ENCODE measurements at regions of chr15 and their contacts with region 1.

Region 1: GRCh38 chr15:68618394-68618793 is 39.6 kb downstream of the CORO2B start:
- DNase-seq: peak; percentile 43
- H3K4me3 ChIP-seq: no peak overlapping the region
- H3K27ac ChIP-seq: no peak overlapping the region
- H3K4me1 ChIP-seq: peaks cover 24% of the 10 kb centered on the region
- H3K27me3 ChIP-seq: peaks cover 0 to under 1% of the 10 kb centered on the region in 2 experiments
- CTCF ChIP-seq: no peak
- POLR2A ChIP-seq: no peak

Region 2: DNA sequence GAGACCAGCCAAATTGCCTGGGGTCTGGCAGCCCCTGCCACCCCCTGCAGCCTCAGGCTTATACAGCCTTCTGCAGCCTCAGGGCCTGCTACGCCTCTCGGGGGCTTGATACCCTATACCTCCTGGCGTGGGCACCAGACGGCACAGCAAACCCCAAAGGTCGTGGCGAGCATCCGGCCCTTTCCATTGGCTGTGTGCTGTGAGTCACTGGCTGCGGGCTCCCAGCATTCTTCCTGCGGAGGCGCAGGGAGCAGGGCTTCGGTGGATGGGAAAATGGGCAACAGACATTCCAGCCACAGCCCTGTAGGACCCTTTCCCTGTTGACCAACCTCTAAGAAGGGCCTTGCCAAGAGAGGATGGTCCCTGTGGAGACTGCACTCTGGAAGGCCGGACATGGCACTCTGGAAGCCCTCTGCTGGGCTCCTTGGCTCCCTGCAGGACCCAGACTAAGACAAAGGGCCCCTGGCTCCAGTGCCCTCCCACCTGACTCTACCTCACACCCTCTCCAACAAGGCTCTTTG is 246.0 kb before region 1 on chr15:
- CTCF ChIA-PET with region 1: no interaction called
- POLR2A ChIA-PET with region 1: no interaction called
- dilution Hi-C with region 1: no loop called
- intact Hi-C with region 1: no loop called
- DNase-seq: peak; percentile 53
- H3K4me3 ChIP-seq: no peak overlapping the region
- H3K27ac ChIP-seq: no peak overlapping the region
- H3K4me1 ChIP-seq: peaks cover 15% of the 10 kb centered on the region
- H3K27me3 ChIP-seq: no peaks in the 10 kb centered on the region
- CTCF ChIP-seq: peak; percentile 41 to 78
- POLR2A ChIP-seq: no peak

Region 3: DNA sequence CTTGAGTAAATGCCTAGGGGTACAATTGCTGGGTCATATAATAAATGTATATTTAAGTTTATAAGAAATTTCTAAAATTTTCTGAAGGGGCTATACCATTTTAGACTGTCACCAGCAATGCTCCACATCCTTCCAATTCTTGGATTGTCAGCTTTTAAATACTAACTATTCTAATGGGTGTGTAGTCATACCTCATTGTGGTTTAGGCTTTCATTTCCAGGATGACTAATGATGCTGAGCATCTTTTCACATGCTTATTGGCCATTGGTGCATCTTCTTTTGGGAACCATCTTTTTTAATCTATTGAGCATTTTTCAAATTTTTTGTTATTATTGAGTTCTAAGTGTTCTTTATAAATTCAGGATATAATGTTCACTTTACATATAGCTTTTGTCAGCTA is 92.1 kb before region 1 on chr15:
- CTCF ChIA-PET with region 1: no interaction called
- POLR2A ChIA-PET with region 1: no interaction called
- dilution Hi-C with region 1: no loop called
- intact Hi-C with region 1: no loop called
- DNase-seq: no peak
- H3K4me3 ChIP-seq: no peak overlapping the region
- H3K27ac ChIP-seq: no peak overlapping the region
- H3K4me1 ChIP-seq: peaks cover 7% of the 10 kb centered on the region
- H3K27me3 ChIP-seq: peaks cover 4 to 8% of the 10 kb centered on the region in 2 experiments
- CTCF ChIP-seq: no peak
- POLR2A ChIP-seq: no peak

Region 4: DNA sequence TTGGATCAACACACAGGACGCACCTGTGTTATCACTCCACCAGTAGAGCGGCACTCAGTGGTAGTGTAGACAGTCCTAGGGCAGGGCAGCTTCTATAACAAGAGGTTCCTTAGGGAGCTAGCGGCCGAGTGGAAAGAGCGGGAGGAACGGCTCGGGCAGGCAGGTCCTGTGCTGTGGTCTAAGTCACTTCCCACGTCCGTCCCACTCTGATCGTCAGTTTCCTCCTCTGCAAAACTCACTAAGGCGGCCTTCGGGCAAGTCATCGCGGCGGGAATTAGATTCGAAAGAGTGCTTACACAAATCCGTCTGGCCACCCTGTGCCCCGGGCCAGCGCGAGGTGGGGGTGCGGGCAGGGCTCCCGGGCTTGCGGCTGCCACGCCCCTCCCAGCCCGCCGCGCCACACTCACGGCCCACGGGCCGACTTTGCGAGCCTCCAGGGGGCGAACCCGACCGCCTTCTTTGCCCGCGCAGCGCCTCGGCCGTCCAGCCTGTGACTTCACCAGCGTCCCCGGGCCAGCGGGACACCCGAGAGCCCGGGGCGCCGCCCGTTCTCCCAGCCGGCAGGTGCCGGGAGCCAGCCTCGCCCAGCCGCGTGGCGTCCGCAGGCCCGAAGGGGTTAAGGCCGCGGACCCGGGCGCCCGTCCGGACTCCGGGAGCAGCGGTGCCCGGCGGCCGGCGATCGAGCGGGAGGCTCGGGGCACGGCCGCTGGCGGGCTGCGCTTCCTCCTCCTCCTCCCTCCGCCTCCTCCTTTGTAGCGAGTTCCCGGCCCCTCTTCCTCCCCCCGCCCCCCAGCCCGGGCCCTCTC is 40.0 kb before region 1 on chr15:
- CTCF ChIA-PET with region 1: interaction called, 3 read pairs
- POLR2A ChIA-PET with region 1: no interaction called
- dilution Hi-C with region 1: no loop called
- intact Hi-C with region 1: loop called (anchors 2 kb)
- DNase-seq: peak; percentile 66
- H3K4me3 ChIP-seq: peak overlapping the region; percentile 30 to 44 (median 35)
- H3K27ac ChIP-seq: no peak overlapping the region
- H3K4me1 ChIP-seq: peaks cover 9% of the 10 kb centered on the region
- H3K27me3 ChIP-seq: peaks cover 19 to 28% of the 10 kb centered on the region in 2 experiments
- CTCF ChIP-seq: peak; percentile 25 to 67
- POLR2A ChIP-seq: no peak

Region 5: GRCh38 chr15:68795298-68795848 is 177.0 kb after region 1 on chr15:
- CTCF ChIA-PET with region 1: no interaction called
- POLR2A ChIA-PET with region 1: no interaction called
- dilution Hi-C with region 1: no loop called
- intact Hi-C with region 1: no loop called
- DNase-seq: peak; percentile 93
- H3K4me3 ChIP-seq: no peak overlapping the region
- H3K27ac ChIP-seq: peak overlapping the region; percentile 58
- H3K4me1 ChIP-seq: peaks cover 27% of the 10 kb centered on the region
- H3K27me3 ChIP-seq: no peaks in the 10 kb centered on the region
- CTCF ChIP-seq: no peak
- POLR2A ChIP-seq: no peak

Region 6: DNA sequence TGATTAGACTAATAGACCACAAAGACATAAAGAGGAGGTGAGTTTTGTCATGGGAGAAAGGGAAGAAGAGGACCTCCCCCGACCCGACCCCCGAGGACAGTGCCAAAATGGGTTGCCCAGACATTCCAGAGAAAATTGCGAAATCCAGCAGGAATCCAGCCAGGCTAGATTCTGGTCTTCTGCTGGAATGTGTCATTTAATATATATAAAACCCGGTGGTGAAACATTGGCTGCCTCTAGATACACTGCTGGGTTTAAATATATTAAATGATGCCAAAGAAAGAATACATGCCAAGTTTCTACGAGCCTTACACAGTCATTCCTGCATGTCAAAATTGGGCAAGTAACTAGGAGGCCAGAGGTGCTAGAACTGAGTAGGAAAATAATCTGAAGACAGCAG is 266.7 kb after region 1 on chr15:
- CTCF ChIA-PET with region 1: no interaction called
- POLR2A ChIA-PET with region 1: no interaction called
- dilution Hi-C with region 1: no loop called
- intact Hi-C with region 1: no loop called
- DNase-seq: no peak
- H3K4me3 ChIP-seq: no peak overlapping the region
- H3K27ac ChIP-seq: no peak overlapping the region
- H3K4me1 ChIP-seq: no peaks in the 10 kb centered on the region
- H3K27me3 ChIP-seq: peaks cover 0 to 2% of the 10 kb centered on the region in 2 experiments
- CTCF ChIP-seq: no peak
- POLR2A ChIP-seq: no peak